ENCODE measurements at regions of chr15 and their contacts with region 1.

Region 1: DNA sequence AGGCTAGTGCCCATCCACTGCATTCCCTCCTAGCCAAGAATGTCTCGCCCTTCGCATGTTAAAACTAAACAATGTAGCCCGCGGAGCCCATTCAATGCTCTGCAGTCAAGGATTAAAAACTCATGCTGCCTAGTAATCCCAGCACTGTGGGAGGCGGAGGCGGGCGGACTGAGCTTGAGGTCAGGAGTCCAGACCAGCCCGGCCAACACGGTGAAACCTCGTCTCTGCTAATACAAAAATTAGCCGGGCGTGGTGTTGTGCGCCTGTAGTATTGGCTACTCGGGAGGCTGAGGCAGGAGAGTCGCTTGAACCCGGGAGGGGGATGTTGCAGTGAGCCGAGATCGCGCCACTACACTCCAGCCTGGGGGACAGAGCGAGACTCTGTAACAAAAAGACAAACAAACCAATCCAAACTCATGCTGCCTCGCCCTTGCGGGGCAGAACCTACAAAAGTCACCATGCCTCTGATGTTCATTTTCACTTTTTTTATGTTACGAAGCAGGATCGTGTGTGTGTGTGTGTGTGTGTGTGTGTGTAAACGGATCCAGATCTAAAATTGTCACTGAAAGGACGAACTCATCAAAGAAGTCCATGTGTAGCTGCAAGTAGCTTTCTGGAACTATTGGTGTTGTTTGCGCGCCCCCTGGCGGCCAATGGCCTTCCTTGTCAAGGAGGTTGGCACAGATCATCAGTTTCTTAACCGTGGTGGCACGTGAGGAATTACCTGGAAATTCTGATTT is 54.8 kb upstream of the SPESP1 start:
- DNase-seq: peak; percentile 84
- CTCF ChIP-seq: peak; percentile 81

Region 2: DNA sequence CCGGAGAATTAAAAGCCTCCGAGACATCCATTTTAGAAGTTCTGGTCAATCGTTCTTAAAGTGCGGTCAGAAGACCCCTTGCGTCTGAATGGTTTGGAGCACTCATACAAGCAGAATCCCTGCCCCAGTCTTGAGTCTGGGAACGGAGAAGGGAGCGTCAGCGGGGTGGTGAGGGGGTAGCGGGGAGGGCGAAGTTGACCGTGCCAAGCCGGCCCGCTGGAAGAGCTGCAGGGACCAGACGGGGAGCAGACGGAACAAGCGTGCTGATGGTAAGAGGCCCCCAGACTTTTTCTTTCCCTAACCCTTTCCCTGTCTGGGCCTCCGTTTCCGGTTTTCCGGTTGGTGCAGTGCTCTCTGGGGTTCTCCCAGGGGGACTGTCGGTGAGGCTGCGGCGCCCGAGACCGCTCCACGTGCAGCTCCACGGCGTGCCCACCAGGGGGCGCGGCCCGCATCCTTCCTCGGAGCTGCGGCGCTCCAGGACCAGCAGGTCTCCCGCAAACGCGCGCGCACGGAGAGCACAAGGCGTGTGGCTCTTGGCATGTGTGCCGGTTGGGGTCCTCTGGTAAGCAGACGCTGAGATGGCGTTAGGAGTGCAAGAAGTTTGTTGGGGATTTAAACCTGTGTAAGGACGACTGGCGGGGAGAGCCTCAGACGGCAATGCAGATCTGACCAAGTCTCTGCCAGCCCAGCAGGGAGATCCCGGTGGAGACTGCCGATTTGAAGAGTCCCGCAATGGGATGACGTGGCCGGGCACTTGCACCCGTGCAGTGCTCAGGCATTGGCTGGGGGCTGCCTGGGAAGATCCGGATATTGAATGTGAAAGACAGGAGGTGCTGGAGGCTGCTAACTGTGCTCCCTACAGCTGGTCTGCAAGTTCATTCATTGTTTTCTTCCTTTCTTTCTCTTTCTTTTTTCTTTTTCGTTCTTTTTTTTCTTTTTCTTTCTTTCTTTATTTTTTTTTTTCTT is 315.9 kb before region 1 on chr15:
- CTCF ChIA-PET with region 1: interaction called, 60 read pairs
- POLR2A ChIA-PET with region 1: no interaction called
- DNase-seq: peak; percentile 88
- CTCF ChIP-seq: peak; percentile 91

Region 3: GRCh38 chr15:68709876-68710275 is 165.7 kb before region 1 on chr15:
- CTCF ChIA-PET with region 1: no interaction called
- POLR2A ChIA-PET with region 1: no interaction called
- DNase-seq: no peak
- CTCF ChIP-seq: no peak

Region 4: GRCh38 chr15:68730471-68730919 is 145.1 kb before region 1 on chr15:
- CTCF ChIA-PET with region 1: interaction called, 67 read pairs
- POLR2A ChIA-PET with region 1: no interaction called
- DNase-seq: peak; percentile 48
- CTCF ChIP-seq: peak; percentile 46

Region 5: DNA sequence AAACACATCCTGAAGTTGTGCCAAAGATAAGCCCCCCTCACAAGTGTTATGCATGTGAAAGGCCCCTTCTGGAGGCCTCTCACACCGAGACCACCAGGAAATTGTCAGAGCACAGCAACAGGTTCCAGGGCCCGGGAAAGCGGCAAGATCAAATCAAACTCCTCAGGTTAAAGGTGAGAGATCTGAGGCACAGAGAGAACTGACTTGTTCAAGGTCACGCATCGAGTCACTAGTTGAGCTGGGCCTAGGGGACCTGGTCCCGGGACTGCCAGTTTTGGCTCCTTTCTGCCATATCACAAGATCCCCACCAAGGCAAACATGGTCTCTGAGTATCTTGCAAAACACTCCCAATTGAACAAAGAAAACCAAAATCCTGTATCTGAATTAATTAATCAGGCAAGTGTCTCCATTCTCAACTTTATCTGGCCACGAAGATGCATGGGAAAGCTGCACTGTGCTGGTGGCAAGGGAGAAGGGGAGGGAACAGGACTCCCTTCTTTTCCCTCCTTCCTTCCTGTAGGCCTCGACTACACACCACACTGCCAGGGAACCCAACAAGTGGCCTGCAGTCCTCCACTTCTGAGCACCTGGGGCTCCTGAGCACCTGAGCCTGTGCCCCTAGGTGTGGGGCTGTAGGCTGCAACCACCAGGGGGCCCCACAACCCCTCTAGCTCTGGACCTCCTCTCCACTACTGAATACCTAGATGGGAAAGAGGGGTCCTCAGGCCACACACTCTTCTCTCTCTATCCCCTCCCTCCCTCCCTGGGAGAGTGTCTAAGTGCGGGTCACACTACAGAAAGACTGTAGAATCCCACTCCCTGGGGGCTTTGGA is 92.1 kb before region 1 on chr15:
- CTCF ChIA-PET with region 1: interaction called, 46 read pairs
- POLR2A ChIA-PET with region 1: no interaction called
- DNase-seq: peak; percentile 70
- CTCF ChIP-seq: peak; percentile 73

Region 6: DNA sequence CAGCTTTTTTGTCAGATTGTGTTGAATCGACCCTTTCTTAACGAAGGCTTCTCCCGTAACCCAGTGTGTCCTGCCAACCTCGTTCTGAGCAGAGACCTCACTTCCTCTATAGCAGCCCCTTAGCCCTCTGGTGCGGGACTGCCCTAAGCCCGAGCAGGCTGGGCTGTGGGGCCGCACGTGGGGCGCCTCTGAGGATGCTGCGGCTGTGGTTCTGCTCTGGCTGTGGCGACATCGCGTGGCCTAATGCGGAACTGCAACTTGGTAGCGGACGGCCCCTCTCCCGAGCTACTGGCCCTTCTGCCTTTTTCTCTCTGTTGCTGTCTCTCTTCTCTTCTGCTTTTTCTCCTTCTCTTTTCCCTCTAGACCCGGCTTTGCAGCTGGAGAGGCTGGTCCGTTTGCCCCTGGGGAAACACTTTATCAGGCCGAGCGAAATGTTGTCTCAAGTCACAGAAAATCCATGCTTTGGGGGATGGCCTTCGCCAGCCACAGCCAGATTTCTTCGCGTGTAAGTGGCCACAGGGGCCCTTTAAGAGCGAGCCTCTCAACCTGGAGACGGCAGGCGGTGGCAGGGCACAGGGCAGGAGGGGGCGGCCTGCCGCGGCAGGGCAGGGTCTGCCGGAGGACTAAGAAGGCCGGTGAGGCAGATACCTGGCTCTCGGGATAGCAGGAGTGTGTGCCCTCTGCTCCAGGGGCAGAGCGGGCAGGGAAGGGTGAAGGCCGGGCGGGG is 519.2 kb after region 1 on chr15:
- CTCF ChIA-PET with region 1: no interaction called
- POLR2A ChIA-PET with region 1: no interaction called
- DNase-seq: peak; percentile 89
- CTCF ChIP-seq: peak; percentile 92

Measured in GM10248 (cell line).